ENCODE measurements at regions of chr10 and their contacts with region 1.

Region 1: GRCh38 chr10:69202332-69202731 is 17.8 kb upstream of the HKDC1 start:
- DNase-seq: no peak
- ATAC-seq: peak; percentile 65
- H3K4me3 Mint-ChIP-seq: no peak overlapping the region
- H3K27ac Mint-ChIP-seq: peak overlapping the region; percentile 81
- H3K4me1 Mint-ChIP-seq: peaks cover 58% of the 10 kb centered on the region
- H3K27me3 Mint-ChIP-seq: no peaks in the 10 kb centered on the region

Region 2: GRCh38 chr10:69217119-69217754 is 14.9 kb after region 1 on chr10:
- CTCF ChIA-PET with region 1: interaction called, 37 read pairs
- POLR2A ChIA-PET with region 1: interaction called, 7 read pairs
- DNase-seq: no peak
- ATAC-seq: no peak
- H3K4me3 Mint-ChIP-seq: no peak overlapping the region
- H3K27ac Mint-ChIP-seq: peak overlapping the region; percentile 12
- H3K4me1 Mint-ChIP-seq: peaks cover 45% of the 10 kb centered on the region
- H3K27me3 Mint-ChIP-seq: no peaks in the 10 kb centered on the region

Region 3: GRCh38 chr10:69222157-69223027 is 20.1 kb after region 1 on chr10:
- CTCF ChIA-PET with region 1: interaction called, 37 read pairs
- POLR2A ChIA-PET with region 1: interaction called, 4 read pairs
- DNase-seq: peak; percentile 89
- ATAC-seq: peak; percentile 91
- H3K4me3 Mint-ChIP-seq: peak overlapping the region; percentile 77
- H3K27ac Mint-ChIP-seq: peak overlapping the region; percentile 95
- H3K4me1 Mint-ChIP-seq: peaks cover 51% of the 10 kb centered on the region
- H3K27me3 Mint-ChIP-seq: no peaks in the 10 kb centered on the region

Region 4: GRCh38 chr10:69458426-69459108 is 256.2 kb after region 1 on chr10:
- CTCF ChIA-PET with region 1: no interaction called
- POLR2A ChIA-PET with region 1: no interaction called
- DNase-seq: no peak
- ATAC-seq: no peak
- H3K4me3 Mint-ChIP-seq: no peak overlapping the region
- H3K27ac Mint-ChIP-seq: peak overlapping the region; percentile 27
- H3K4me1 Mint-ChIP-seq: peaks cover 23% of the 10 kb centered on the region
- H3K27me3 Mint-ChIP-seq: peaks cover 4% of the 10 kb centered on the region